Prostate gland (tissue), 2 donors: ENCODE measurements at regions of chr11 and their contacts with region 1.

Region 1: GRCh38 chr11:2885676-2886081 is at the start of gene CDKN1C:
- DNase-seq: peak; percentile 89
- H3K4me3 ChIP-seq: peak within 1 kb of the TSS; percentile 81 to 88
- H3K27ac ChIP-seq: peak within 1 kb of the TSS; percentile 88 to 89
- H3K4me1 ChIP-seq: peaks cover 3% of the 10 kb centered on the region
- H3K27me3 ChIP-seq: no peaks in the 10 kb centered on the region
- CTCF ChIP-seq: peak in 1 of 4 experiments; percentile 36
- POLR2A ChIP-seq: peak; percentile 98
- total RNA-seq, gene CDKN1C: 36.5 to 42.7 TPM

Region 2: DNA sequence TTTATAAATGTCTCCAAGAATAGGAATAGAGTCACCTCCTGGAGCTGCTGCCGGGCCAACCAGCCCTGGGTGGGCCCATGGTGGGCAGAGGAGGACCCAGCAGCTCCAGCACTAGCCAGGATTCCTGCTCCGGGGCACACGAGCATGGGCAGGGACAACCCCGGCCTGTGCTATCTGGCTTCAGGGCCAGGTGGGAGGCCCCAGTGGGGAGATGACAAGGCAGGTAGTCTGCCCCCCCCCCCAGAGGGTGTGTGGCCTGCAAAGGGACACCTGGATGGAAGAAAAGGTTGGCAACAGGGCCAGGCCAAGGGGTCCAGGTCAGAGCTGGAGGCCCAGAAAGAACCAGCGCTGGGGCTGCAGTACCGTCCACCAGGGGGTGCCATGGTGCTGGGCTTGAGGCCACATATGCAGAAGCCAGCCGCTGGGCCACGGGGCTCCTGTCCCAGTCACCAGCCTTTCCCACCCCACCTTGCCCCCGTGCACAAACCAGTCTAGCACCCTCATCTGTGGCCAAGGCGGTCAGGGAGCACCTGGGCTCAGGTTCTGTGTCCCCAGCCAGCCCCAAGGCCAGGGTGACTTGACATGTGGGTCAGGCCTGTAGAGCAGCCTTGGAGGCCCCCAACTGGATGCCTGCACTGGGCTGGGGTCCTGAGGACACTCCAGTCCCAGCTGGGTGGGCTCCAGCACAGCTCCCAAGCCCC is 580.4 kb before region 1 on chr11:
- intact Hi-C with region 1: loop called (anchors 5 kb)
- DNase-seq: peak; percentile 74
- H3K4me3 ChIP-seq: no peak overlapping the region
- H3K27ac ChIP-seq: peak overlapping the region in 1 of 2 donors; percentile 19
- H3K4me1 ChIP-seq: no peaks in the 10 kb centered on the region
- H3K27me3 ChIP-seq: no peaks in the 10 kb centered on the region
- CTCF ChIP-seq: peak; percentile 86 to 98 (median 92)
- POLR2A ChIP-seq: no peak

Region 3: DNA sequence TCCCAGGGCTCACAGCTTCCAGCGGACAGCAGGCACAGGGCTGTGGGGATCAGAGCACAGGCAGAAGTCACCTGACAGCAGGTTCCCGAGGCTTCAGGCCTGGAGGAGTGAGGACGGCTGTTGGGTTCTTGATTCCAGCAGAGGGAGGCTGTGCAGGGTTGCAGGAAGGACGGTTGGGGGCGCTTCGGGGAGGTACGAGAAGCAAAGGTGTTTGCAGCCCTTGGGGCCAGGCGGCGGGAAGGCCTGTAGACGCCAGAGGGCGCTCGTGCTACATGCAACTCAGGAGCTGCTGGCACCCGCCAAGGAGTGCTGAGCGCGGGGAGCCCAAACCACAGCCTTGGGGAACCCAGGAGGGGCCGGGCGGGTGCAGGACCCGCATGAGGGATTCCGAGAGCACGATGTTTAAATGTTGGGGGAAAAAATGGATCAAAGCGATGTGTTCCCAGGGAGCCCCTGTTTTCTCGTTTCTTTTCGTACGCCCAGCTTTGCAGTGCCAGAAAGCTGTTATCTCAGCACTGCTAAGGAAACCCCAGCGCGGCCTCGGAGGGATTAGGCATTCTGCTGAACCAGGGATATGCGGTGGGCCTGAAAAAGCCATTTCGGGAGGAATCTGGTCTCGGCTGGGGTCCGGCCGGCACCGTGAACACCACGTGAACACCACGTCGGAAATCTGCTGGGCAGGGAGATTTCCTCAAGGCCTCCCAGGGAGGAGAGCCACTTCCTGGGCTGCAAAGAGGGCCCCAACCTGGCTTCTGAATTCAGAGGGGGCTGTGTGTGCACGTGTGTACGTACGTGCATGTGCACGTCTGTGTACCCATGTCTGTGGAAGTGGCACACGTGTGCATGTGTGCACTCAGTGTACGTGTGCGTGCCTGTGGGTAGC is 352.7 kb before region 1 on chr11:
- intact Hi-C with region 1: loop called (anchors 1 kb)
- DNase-seq: peak; percentile 91
- H3K4me3 ChIP-seq: no peak overlapping the region
- H3K27ac ChIP-seq: no peak overlapping the region
- H3K4me1 ChIP-seq: no peaks in the 10 kb centered on the region
- H3K27me3 ChIP-seq: no peaks in the 10 kb centered on the region
- CTCF ChIP-seq: peak; percentile 99 to 100 (median 100)
- POLR2A ChIP-seq: no peak

Region 4: GRCh38 chr11:2778630-2779498 is 106.8 kb before region 1 on chr11:
- intact Hi-C with region 1: loop called (anchors 5 kb)
- DNase-seq: peak; percentile 87
- H3K4me3 ChIP-seq: no peak overlapping the region
- H3K27ac ChIP-seq: peak overlapping the region; percentile 74
- H3K4me1 ChIP-seq: peaks cover 16% of the 10 kb centered on the region
- H3K27me3 ChIP-seq: no peaks in the 10 kb centered on the region
- CTCF ChIP-seq: peak in 2 of 4 experiments; percentile 60 to 70
- POLR2A ChIP-seq: peak; percentile 7